ENCODE measurements at regions of chr1 and their contacts with region 1.

Region 1: DNA sequence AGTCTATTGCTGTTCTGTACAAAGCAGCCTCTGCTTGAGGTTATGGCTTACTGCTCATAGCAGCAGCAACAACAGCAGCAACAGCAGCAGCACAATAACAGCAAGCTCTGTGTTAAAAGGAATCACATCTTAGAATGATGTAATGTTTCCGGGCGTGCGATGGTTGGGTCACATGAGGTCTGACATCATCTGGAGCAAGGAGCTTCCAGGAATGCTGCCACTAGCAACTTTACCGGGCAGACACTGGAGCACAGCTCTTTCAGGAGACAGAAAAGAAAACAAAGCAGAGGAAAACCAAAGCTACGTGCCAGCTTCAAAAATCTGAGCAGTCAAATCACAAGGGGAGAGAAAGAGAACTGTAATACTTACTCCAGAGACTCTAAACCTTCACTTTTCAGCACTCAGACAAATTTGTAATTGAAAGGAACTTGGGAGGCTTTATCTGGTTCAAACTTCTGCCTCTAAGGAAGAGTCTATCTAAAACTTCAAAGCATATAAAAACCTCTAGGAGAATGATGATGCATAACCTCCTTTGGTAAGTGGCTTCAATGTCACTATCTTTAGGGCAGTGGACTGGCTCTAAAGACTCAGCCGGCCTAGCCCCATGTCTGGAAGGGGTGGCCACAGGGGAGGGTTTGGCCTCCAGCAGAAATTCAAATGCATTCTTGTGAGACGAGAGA is 28.3 kb upstream of the RAB3GAP2 start:
- DNase-seq: peak; percentile 89
- H3K4me3 ChIP-seq: no peak overlapping the region
- H3K27me3 ChIP-seq: no peaks in the 10 kb centered on the region
- CTCF ChIP-seq: no peak

Region 2: DNA sequence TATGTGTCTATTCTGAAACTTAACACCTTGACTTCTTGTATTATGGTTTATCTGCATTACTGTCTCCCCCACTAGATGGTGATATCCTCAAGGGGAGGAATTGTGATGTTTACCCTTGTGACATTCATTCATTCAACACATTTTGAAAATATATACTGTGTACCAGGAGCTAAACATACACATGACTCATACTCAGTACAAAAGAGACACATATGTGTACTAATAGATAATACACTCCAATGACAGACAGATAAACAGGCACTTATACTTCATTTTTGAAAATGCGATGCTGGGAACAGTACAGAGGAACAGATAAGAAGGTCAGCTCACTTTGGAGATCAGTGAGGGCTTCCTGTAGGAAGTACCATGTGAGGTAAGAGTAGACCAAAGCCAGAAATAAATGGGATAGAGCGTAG is 19.4 kb before region 1 on chr1:
- CTCF ChIA-PET with region 1: interaction called, 26 read pairs
- POLR2A ChIA-PET with region 1: no interaction called
- DNase-seq: no peak
- H3K4me3 ChIP-seq: no peak overlapping the region
- H3K27me3 ChIP-seq: peaks cover 9% of the 10 kb centered on the region
- CTCF ChIP-seq: peak; percentile 68

Region 3: DNA sequence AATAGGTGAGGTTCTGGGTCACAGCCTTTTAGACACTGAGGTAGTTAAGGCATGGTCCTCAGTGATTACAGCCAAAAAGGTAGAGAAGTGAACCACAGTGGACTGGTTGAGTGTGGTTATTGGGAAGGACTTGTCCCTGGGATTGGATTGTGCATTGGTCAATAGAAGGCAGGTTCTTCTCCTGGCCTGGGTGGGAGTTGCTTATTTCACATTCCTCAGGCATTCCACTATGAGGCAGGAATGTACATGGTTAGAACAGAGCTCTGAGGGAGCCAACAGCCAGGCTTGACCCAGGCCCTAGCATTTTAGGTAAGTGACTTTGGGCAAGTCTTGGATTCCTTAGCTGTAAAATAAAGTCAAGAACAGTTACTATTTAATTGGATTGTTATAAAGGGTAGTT is 129.5 kb after region 1 on chr1:
- CTCF ChIA-PET with region 1: interaction called, 3 read pairs
- POLR2A ChIA-PET with region 1: interaction called, 18 read pairs
- DNase-seq: no peak
- H3K4me3 ChIP-seq: no peak overlapping the region
- H3K27me3 ChIP-seq: no peaks in the 10 kb centered on the region
- CTCF ChIP-seq: no peak

Measured in BJ (cell line).